ENCODE measurements at regions of chr2 and their contacts with region 1.

Region 1: DNA sequence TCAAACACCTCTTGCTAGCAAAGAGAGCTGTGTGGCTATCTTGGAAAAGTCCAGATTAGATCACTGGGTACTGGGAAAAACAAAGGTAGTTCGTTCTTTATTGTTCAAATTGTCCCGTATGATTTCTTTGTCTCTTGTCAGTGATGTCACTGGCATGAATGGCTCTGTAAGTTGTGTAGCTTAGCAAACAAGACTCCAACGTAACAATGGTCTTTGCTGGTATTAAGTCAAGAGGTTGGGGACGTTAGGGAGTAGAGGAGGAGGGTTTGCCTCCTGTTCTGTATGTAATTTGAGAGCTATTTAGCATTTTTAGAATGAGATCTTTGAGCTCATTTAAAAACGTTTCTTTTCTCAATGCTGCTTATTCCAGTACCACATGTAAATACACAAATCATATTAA is 216.5 kb upstream of the SP5 start:
- DNase-seq: no peak
- H3K4me3 ChIP-seq: no peak overlapping the region
- H3K27ac ChIP-seq: no peak overlapping the region
- H3K4me1 ChIP-seq: no peaks in the 10 kb centered on the region
- H3K27me3 ChIP-seq: no peaks in the 10 kb centered on the region
- CTCF ChIP-seq: no peak
- EP300 ChIP-seq: no peak
- POLR2A ChIP-seq: no peak

Region 2: DNA sequence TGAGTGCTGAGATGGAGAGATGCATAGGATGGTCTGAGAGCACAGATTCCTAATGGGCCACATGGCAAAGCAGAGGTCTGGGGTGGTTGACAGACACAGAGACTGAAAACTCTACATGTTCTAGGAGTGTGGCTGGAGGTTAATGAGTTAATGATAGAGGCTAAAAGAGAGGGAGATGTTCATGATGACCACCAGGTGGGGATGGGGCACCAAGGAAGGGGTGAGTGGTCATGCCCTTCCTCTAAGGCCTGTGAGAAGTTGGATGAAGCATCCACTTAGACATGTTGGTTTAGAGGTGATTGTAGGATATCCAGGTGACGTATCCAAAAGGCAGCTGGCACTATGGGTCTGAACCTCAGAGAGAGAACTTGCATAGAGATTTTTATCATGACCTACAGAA is 1238.4 kb before region 1 on chr2:
- intact Hi-C with region 1: loop called in 1 of 4 experiments (anchors 5 kb)
- DNase-seq: no peak
- H3K4me3 ChIP-seq: no peak overlapping the region
- H3K27ac ChIP-seq: no peak overlapping the region
- H3K4me1 ChIP-seq: no peaks in the 10 kb centered on the region
- H3K27me3 ChIP-seq: no peaks in the 10 kb centered on the region
- CTCF ChIP-seq: no peak
- EP300 ChIP-seq: no peak
- POLR2A ChIP-seq: no peak

Region 3: GRCh38 chr2:170425281-170425751 is 73.3 kb before region 1 on chr2:
- intact Hi-C with region 1: no loop called
- DNase-seq: no peak
- H3K4me3 ChIP-seq: no peak overlapping the region
- H3K27ac ChIP-seq: no peak overlapping the region
- H3K4me1 ChIP-seq: no peaks in the 10 kb centered on the region
- H3K27me3 ChIP-seq: no peaks in the 10 kb centered on the region
- CTCF ChIP-seq: no peak
- EP300 ChIP-seq: no peak
- POLR2A ChIP-seq: no peak

Region 4: GRCh38 chr2:170922634-170923494 is 424.2 kb after region 1 on chr2:
- intact Hi-C with region 1: no loop called
- DNase-seq: no peak
- H3K4me3 ChIP-seq: no peak overlapping the region
- H3K27ac ChIP-seq: no peak overlapping the region
- H3K4me1 ChIP-seq: no peaks in the 10 kb centered on the region
- H3K27me3 ChIP-seq: no peaks in the 10 kb centered on the region
- CTCF ChIP-seq: no peak
- EP300 ChIP-seq: no peak
- POLR2A ChIP-seq: no peak